ENCODE measurements at regions of chr11 and their contacts with region 1.

Region 1: DNA sequence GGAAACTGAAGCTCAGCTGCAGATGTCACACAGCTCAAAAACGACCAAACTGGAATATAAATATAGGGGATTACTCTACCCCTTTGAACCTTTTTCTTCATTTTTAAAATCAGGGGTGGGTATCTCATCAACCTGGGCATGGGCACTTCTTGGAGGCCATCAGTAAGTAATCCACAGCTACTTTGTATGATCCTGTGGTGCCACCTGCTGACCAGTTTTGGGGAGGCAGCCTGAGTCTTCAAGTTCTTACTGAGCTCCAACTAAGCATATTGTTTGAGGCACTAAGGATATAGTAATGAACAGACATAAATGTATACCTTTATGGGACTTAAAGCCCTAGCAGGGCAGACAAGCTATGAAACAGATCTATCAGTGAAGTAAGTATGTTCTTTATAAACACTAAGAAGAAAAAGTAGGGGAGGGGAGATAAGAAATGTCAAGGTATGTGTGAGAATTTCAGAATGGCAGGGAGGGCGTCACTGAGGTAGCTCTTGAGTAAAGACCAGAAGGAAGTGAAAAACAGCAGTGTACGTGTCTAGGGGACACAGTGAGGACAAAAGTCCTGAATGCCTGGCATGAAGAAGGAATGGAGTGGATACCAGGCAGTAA is 18.4 kb downstream of the TUB start:
- H3K4me3 ChIP-seq: no peak overlapping the region
- H3K27ac ChIP-seq: no peak overlapping the region
- H3K4me1 ChIP-seq: no peaks in the 10 kb centered on the region
- CTCF ChIP-seq: no peak; the same call in 1 of the 2 replicates

Region 2: DNA sequence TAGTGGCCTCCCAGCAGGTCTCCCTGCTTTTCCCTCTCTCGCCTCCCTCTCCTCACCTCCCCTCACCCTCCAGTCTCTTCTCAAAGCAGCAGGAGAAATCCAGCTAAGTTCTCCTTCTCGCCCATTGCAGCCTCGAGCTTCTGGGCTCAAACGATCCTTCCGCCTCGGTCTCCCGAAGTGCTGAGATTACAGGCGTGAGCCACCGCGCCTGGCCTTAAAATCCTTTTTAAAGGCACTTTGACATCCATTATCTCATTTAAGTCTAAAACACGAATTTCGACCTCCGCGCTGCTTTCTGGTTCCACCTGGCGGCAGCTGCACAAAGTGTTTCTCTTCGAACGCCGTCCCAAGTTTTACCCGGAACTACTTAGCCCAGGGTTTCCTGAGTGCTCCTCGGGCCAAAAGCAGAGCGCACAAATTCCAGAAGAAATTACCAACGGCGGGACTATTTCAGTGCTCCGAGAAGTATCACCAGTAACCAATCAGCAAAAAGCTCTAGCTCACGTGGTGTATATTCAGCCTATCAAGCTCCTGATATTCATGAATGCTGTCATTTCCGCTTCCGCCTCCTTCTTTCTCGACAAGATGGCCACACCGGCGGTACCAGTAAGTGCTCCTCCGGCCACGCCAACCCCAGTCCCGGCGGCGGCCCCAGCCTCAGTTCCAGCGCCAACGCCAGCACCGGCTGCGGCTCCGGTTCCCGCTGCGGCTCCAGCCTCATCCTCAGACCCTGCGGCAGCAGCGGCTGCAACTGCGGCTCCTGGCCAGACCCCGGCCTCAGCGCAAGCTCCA is 112.4 kb before region 1 on chr11 and contains the start of gene EIF3F:
- CTCF ChIA-PET with region 1: interaction called, 11 read pairs
- POLR2A ChIA-PET with region 1: interaction called, 3 read pairs
- H3K4me3 ChIP-seq: peak within 1 kb of the TSS; percentile 62
- H3K27ac ChIP-seq: no peak within 1 kb of the TSS; the same call in 1 of the 2 replicates
- H3K4me1 ChIP-seq: 0 out of 2 replicates have a peak, but pooled peaks cover 3% of the 10 kb centered on the region
- CTCF ChIP-seq: peak; percentile 78

Region 3: DNA sequence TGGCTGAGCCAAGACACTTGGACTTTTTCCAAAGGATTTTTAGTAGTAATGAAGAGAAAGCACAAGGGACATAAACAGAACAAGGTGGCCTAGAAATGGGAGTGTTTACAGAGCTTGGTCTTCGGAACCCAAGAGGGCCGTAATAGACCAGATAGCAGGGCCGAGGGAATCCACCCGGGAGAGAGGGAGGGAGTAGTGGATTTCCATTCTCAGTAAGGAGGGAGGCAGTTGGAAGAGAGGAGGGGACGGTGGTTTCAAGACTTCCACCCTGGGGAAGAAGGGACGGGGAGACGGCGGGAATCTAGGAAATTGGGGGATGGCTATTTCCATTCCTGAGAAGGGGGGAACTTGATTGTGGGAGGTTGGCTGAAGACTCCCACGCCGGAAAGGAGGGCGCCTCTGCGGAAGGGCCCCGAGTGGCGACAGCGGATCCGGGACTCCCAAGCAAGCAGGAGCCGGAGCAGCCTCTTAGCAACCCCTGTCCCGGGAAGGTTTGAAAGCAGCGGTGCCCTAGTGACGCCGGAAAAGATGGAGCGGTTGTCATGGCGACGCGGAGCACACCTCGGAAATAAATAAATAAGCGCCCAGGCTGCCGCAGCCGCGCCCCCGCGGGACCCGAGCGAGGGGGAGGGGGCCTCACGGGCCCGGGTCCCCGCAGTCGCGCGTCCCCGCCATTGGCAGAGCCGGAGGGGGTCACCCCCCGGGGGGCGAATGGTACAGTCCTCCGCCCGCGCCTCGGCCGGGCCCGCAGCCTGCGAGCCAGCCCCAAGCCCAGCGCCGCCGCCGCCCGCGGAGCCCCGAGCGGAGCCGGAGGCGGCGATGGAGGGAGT is 80.7 kb before region 1 on chr11:
- CTCF ChIA-PET with region 1: interaction called, 25 read pairs
- POLR2A ChIA-PET with region 1: interaction called, 5 read pairs
- H3K4me3 ChIP-seq: peak overlapping the region; percentile 61
- H3K27ac ChIP-seq: peak overlapping the region; percentile 48; the same call in 1 of the 2 replicates
- H3K4me1 ChIP-seq: no peaks in the 10 kb centered on the region
- CTCF ChIP-seq: no peak

Region 4: GRCh38 chr11:8033305-8034105 is 65.9 kb before region 1 on chr11:
- CTCF ChIA-PET with region 1: interaction called, 374 read pairs
- POLR2A ChIA-PET with region 1: no interaction called
- H3K4me3 ChIP-seq: no peak overlapping the region
- H3K27ac ChIP-seq: no peak overlapping the region
- H3K4me1 ChIP-seq: no peaks in the 10 kb centered on the region
- CTCF ChIP-seq: peak; percentile 69

Region 5: DNA sequence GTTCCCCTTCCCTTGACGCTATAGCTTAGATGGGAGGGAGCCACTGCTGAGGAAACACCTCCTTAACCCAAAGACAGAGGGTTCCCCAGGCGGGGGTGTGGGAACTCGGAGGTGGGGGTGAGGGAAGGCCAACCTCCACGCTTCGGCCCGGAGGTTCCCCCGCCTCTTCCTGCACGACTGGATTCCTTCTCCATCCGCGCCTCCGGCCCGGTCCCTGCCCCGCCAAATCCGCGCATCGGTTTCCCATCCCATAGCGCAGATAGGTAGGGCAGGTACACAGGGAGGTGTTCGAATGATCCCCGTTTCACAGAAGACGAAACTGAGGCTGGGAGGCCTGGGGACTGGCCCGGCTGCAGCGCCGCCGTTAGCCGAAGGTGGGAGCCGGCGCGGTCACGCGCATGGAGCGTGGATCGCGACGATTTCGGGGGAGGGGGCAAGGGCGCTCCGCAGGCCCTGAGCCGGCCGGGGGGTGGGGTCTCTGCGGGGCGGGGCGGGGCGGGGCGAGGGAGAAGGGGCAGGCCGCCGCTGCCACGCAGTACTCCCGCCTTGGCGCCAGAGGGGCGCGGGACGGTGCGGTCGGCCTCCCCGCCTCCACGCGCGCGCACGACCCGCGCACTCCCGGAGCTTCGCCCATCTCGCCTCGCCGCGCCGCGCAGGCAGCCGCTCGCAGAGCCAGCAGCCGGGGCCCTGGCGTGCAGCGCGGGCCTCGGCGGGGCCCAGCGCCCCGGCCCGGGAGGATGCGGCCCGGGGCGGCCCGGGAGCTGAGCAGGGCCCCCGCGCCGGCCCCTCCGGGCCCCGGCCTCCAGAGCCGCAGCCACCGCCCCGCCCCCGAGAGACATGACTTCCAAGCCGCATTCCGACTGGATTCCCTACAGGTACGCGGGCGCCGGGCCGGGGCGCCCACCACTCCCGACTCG is 18.5 kb before region 1 on chr11 and contains the start of gene TUB:
- CTCF ChIA-PET with region 1: interaction called, 86 read pairs
- POLR2A ChIA-PET with region 1: interaction called, 4 read pairs
- H3K4me3 ChIP-seq: peak within 1 kb of the TSS; percentile 59
- H3K27ac ChIP-seq: peak within 1 kb of the TSS; percentile 42; the same call in 1 of the 2 replicates
- H3K4me1 ChIP-seq: peaks cover 6% of the 10 kb centered on the region; the same call in 1 of the 2 replicates
- CTCF ChIP-seq: peak; percentile 39; the same call in 1 of the 2 replicates

Region 6: DNA sequence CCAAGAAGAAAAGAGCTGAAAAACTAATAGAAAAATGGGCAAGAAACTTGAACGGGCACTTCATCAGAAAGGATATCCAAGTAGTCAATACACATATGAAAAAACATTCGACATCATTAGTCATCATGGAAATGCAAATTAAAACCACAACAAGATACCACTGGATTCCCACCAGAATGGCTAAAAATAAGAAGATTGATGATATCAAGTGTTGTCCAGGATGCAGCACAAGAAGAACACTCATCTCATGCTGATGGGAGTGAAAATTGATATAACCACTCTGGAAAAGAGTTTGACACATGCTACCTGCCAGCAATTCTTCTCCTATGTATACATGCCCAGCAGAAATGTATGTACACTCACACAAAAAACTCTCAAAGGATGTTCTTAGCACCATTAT is 1018.9 kb after region 1 on chr11:
- CTCF ChIA-PET with region 1: interaction called, 11 read pairs
- POLR2A ChIA-PET with region 1: no interaction called
- H3K4me3 ChIP-seq: no peak overlapping the region
- H3K27ac ChIP-seq: no peak overlapping the region
- H3K4me1 ChIP-seq: no peaks in the 10 kb centered on the region
- CTCF ChIP-seq: no peak

Measured in HEK293 (cell line).